Mammary epithelial cell (primary cell): ENCODE measurements at regions of chr11 and their contacts with region 1.

Region 1: DNA sequence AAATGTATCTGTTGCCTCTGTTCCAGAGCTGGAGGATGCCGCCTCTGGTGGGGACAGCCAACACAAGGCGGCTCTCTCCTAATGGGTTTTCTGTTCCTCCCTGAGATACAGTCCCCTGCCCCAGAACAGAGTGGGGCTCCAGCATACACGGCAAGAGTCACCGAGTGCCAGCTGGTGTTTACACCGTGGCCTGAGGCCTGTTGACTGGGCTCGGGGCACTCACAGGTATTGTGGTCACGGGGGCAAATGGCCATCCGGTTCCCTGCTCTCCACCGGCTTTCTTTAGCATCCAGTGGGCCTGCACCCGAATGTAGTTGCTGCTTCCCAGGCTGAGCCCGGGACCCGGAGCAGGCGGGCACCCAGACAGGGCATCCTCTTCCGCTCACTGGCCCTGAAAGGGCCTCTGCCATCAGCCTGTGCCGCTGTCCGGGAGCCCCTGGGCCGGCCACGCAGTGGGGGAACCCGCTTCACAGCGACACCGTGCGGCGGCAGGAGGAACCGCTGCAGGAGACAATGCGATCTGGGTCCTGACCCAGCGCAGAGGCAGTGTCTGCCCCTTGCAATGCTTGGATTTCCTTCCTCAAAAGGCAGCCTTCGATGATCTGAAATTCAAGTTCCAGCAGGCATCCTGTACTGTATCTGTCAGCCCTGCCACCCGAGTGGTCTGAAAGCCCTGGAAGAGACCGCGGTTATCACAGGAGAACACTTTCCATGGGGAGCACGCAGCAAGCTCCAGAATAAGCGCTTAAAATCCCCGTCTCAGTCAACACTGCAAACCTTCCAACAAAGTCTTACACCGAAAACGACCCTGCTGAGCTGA is 859 bp upstream of the KRTAP5-5 start:
- DNase-seq: no peak
- H3K4me3 ChIP-seq: no peak overlapping the region
- H3K27ac ChIP-seq: no peak overlapping the region
- H3K4me1 ChIP-seq: no peaks in the 10 kb centered on the region
- H3K27me3 ChIP-seq: peaks cover 10% of the 10 kb centered on the region
- CTCF ChIP-seq: peak; percentile 78 to 88

Region 2: GRCh38 chr11:1532014-1532586 is 96.6 kb before region 1 on chr11:
- CTCF ChIA-PET with region 1: no interaction called
- dilution Hi-C with region 1: loop called (anchors 5 kb)
- in situ Hi-C with region 1: no loop called
- intact Hi-C with region 1: no loop called
- DNase-seq: peak; percentile 79
- H3K4me3 ChIP-seq: no peak overlapping the region
- H3K27ac ChIP-seq: peak overlapping the region; percentile 68
- H3K4me1 ChIP-seq: peaks cover 57% of the 10 kb centered on the region
- H3K27me3 ChIP-seq: no peaks in the 10 kb centered on the region
- CTCF ChIP-seq: peak in 1 of 2 donors; percentile 32

Region 3: DNA sequence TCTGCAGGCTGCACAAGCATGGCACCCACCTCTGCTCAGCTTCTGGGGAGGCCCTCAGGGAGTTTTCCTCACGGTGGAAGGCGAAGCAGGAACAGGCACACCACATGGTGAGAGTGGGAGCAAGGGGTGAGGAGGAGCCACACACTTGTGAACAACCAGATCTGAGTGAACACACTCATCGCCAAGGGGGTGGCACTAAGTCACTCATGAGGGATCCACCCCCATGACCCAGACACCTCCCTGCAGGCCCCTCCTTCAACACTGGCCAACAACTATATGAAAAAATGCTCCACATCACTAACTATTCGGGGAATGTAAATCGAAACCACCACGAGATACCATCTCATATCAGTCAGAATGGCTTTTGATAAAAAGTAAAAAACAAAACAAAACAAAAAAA is 29.9 kb before region 1 on chr11:
- CTCF ChIA-PET with region 1: interaction called, 5 read pairs
- dilution Hi-C with region 1: loop called (anchors 5 kb)
- in situ Hi-C with region 1: no loop called
- intact Hi-C with region 1: loop called (anchors 2 kb)
- DNase-seq: no peak
- H3K4me3 ChIP-seq: no peak overlapping the region
- H3K27ac ChIP-seq: no peak overlapping the region
- H3K4me1 ChIP-seq: no peaks in the 10 kb centered on the region
- H3K27me3 ChIP-seq: peaks cover 2% of the 10 kb centered on the region
- CTCF ChIP-seq: no peak